OCI-LY7 (cell line): ENCODE measurements at regions of chr16 and their contacts with region 1.

Region 1: DNA sequence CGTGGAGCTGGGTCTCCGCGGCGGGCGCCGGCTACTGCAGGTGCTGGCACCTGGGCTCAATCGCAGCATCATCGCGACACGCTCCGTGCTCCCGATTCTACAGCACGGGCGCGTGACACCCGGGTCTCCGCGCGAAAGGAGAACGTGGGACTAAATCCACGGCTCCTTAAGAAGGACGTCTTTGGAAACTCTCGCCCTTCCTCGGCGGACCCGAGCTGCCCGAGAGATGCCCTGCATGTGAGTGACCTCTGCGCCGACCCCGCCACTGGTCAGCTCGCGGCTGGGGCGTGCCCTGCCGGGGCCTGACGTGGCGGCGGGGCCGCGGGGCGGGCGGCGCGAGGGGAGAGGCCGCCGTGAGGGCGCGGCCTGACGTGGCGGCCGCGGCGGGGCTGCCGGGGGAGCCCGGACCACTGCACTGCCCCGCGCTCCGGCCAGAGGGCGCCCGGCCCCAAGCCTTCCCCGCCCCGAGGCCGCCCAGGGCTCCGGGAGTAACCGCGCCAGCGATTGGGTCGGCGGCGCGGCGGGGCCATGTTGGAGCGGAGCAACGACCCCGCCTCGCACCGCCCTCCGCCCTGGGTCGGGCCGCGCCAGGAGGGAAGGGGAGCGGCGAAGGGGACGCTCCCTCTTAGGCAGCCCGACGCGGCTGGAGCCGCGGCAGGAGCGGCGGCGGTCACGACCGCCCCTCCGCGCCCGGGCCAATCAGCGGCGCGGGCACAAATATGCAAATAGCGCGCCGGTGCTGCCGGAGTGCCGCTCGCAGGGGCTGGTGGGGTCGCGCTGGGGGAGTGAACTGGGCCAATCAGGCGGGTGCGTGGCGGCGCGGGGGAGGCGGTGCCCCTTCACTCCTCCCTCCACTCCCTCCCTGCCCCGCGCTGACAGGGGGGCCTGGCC is 75.6 kb downstream of the CHD9 start:
- DNase-seq: peak; percentile 94
- H3K4me3 ChIP-seq: peak overlapping the region; percentile 99
- H3K27ac ChIP-seq: peak overlapping the region; percentile 68
- H3K4me1 ChIP-seq: peaks cover 43% of the 10 kb centered on the region
- CTCF ChIP-seq: peak; percentile 54; the same call in 1 of the 2 replicates

Region 2: DNA sequence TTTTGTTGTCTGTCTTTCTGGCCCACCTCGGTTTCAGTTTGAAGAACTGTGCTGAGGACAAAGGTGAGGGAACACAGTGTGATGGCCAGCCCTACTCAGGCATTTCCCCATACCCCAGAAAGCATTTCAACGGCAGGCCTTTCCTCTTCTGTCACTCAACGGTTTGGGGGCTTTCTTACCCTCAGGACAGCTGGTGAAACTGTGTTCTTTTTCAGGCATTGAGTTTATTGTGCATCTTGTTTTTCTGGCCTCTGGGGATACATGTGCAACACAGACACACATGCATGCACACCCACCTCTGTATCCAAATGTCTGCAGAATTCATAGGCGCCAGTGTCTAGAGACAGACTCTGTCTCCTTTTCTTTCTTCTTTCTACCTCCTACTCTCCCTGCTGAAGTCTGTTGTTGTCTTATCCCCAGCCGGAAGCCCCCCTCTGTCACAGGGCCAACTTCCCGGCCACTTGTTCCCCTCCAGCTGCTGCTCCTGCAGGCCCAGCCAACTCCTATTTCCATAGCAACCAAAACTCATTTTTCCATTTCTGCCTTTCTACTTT is 58.6 kb before region 1 on chr16:
- CTCF ChIA-PET with region 1: no interaction called
- POLR2A ChIA-PET with region 1: interaction called, 3 read pairs
- intact Hi-C with region 1: loop called (anchors 2 kb)
- DNase-seq: peak; percentile 84
- H3K4me3 ChIP-seq: peak overlapping the region; percentile 61
- H3K27ac ChIP-seq: peak overlapping the region; percentile 94
- H3K4me1 ChIP-seq: peaks cover 65% of the 10 kb centered on the region
- CTCF ChIP-seq: no peak

Region 3: DNA sequence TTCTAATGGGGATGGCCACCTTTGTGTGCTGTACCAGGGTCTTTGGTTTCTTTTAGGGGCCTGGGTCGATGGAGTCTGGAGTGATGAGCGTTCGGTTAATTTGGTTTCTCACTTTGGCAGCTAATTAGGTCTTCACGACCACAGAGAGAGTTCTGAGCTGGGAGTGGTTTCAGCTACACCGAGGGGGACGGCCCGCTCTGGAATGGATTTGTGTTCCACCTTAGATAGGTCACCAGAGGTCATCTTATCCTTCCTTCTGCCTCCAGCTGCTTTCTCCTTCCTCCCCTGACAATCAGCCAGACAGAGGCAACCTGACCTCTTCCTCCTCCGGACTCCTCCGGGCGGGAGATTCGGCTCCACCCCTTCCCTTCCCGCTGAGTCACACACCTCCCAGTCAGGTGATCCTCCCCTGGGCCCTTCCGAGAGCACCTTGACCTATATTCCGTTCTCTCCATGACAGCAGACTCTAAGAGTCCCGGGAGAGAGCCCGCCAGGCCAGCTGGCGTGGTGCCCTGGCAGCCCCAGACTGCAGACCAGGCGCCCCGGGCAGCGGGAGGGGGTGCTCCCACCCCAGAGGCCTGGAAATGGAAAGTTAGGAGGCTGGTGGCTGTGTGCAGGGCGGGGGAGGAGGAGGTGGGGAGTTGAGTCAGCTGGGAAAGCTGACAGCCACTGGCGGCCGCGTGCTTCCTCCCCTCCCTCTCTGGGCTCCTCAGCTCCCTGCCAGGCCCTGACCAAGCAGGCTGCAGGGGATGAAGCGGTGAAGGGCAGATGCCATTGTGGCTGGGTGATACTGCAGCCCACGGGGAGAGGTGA is 30.9 kb before region 1 on chr16:
- CTCF ChIA-PET with region 1: no interaction called
- POLR2A ChIA-PET with region 1: interaction called, 8 read pairs
- intact Hi-C with region 1: loop called (anchors 1 kb)
- DNase-seq: peak; percentile 70
- H3K4me3 ChIP-seq: peak overlapping the region; percentile 69
- H3K27ac ChIP-seq: peak overlapping the region; percentile 97
- H3K4me1 ChIP-seq: peaks cover 81% of the 10 kb centered on the region
- CTCF ChIP-seq: no peak

Region 4: GRCh38 chr16:53159781-53160436 is 29.5 kb after region 1 on chr16:
- CTCF ChIA-PET with region 1: no interaction called
- POLR2A ChIA-PET with region 1: interaction called, 4 read pairs
- intact Hi-C with region 1: loop called (anchors 2 kb)
- DNase-seq: peak; percentile 75
- H3K4me3 ChIP-seq: no peak overlapping the region
- H3K27ac ChIP-seq: no peak overlapping the region
- H3K4me1 ChIP-seq: no peaks in the 10 kb centered on the region
- CTCF ChIP-seq: peak; percentile 91

Region 5: GRCh38 chr16:53207810-53208752 is 77.7 kb after region 1 on chr16:
- CTCF ChIA-PET with region 1: no interaction called
- POLR2A ChIA-PET with region 1: no interaction called
- intact Hi-C with region 1: loop called (anchors 2 kb)
- DNase-seq: peak; percentile 88
- H3K4me3 ChIP-seq: peak overlapping the region; percentile 88
- H3K27ac ChIP-seq: peak overlapping the region; percentile 94
- H3K4me1 ChIP-seq: peaks cover 33% of the 10 kb centered on the region
- CTCF ChIP-seq: peak; percentile 83

Region 6: GRCh38 chr16:53503270-53503923 is 373.0 kb after region 1 on chr16:
- CTCF ChIA-PET with region 1: no interaction called
- POLR2A ChIA-PET with region 1: no interaction called
- intact Hi-C with region 1: loop called (anchors 5 kb)
- DNase-seq: peak; percentile 100
- H3K4me3 ChIP-seq: peak overlapping the region; percentile 82
- H3K27ac ChIP-seq: peak overlapping the region; percentile 49
- H3K4me1 ChIP-seq: peaks cover 23% of the 10 kb centered on the region
- CTCF ChIP-seq: no peak